IMR-90 (cell line): ENCODE measurements at regions of chr18 and their contacts with region 1.

Region 1: DNA sequence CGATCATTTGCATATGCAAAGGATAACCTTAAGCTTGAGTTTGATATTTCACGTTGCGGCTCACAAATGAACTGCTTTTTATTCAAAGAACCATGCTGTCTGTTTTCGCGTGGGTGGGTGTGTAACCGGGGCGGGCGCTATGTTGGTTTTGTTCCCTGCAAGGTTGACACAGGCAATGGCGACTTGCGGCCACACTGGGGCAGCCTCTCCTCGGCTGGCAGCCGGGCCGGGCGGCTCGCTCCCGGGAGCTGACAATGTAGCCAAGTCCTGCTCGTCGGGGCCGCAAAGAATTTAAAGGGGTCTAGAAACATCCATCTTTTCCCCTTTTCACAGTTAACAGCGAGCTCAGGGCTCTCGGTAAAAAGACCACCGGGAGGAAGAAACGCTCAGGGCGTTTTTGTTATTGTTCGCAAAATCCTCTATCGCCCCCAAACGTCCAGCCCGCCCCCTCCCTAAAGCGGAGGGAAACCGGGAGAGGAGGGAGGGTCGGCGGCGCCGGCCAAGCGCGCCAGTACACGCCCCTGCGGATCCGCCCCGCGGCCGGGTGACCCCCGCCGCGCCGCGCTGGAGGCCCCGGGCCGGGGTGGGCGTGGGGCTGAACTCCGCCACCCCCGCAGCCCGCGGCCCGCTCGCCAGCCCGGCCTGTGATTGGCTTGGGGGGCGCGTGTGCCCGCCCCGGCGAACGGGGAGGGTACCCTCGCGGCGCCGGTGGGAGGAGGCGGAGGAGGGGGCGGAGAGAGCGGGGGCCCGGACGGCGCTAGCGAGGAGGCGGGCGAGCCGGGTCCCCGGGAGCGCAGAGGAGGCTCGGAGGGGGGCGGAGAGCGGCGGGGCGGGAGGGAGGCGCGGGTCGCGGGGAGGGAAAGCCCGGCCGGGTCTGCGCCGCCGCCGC is at the start of gene NEDD4L:
- DNase-seq: peak; percentile 83
- ATAC-seq: peak; percentile 90
- H3K4me3 ChIP-seq: peak within 1 kb of the TSS; percentile 79
- H3K27ac ChIP-seq: peak within 1 kb of the TSS; percentile 58
- H3K4me1 ChIP-seq: peaks cover 5% of the 10 kb centered on the region
- H3K27me3 ChIP-seq: peaks cover 2% of the 10 kb centered on the region
- CTCF ChIP-seq: peak; percentile 95
- POLR2A ChIP-seq: peak; percentile 54; the same call in 1 of the 2 replicates
- RAD21 ChIP-seq: peak; percentile 92
- total RNA-seq, gene NEDD4L: 10.0 and 12.8 TPM in 2 replicates

Region 2: DNA sequence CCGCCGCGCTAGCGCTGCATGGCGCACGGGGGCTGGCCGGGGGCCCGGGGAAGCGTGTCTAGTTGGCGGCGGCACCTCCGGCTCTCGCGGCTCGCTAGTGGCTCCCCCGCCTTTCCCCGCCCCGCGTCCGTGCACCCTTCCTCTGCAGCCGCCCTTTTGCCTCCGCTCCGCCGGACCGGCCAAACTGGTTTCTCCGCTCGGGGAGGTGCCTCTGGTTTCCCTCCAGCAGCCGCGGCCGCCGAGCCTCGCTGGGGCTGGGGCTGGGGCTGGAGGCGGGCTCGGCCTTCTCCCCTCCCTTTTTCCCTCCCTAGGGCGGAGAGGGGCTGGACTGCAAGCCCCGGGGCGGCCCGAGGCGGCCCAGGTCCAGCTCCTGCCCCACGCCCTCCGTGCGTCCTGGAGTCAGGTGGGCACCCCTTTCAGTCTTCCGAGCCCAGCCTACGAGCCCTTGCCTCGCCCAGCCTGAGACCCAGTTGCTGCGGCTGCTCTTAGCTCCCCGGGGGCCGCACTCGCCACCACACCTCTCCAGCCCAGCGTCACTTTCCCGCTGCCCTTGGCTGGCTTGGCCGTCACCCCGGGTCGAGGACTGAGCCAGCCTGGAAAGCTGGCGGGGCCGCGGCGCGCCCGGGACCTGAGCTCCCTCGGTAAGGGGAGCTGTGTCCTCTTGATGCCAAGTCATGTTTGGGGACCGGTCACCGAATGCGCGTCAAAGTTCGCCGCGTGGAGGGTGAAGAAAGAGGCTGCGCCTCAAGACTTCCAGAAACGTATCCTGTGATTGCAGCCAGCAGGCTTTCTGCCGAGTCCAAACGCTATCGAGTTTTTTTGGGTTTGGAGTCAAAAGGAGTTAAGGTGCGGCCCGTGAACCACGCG is 240.4 kb before region 1 on chr18 and contains the start of gene ATP8B1:
- CTCF ChIA-PET with region 1: no interaction called
- POLR2A ChIA-PET with region 1: no interaction called
- dilution Hi-C with region 1: no loop called
- in situ Hi-C with region 1: no loop called
- intact Hi-C with region 1: loop called (anchors 10 kb)
- DNase-seq: peak; percentile 73
- ATAC-seq: peak; percentile 89
- H3K4me3 ChIP-seq: peak within 1 kb of the TSS; percentile 95
- H3K27ac ChIP-seq: peak within 1 kb of the TSS; percentile 77
- H3K4me1 ChIP-seq: peaks cover 8% of the 10 kb centered on the region
- H3K27me3 ChIP-seq: no peaks in the 10 kb centered on the region
- CTCF ChIP-seq: no peak
- POLR2A ChIP-seq: peak; percentile 47; the same call in 1 of the 2 replicates
- RAD21 ChIP-seq: no peak
- total RNA-seq, gene ATP8B1: 136 and 170 TPM in 2 replicates

Region 3: GRCh38 chr18:57970356-57971080 is 73.2 kb before region 1 on chr18:
- CTCF ChIA-PET with region 1: no interaction called
- POLR2A ChIA-PET with region 1: no interaction called
- dilution Hi-C with region 1: no loop called
- in situ Hi-C with region 1: no loop called
- intact Hi-C with region 1: loop called (anchors 5 kb)
- DNase-seq: no peak
- ATAC-seq: no peak
- H3K4me3 ChIP-seq: no peak overlapping the region
- H3K27ac ChIP-seq: no peak overlapping the region
- H3K4me1 ChIP-seq: peaks cover 4% of the 10 kb centered on the region; the same call in 1 of the 2 replicates
- H3K27me3 ChIP-seq: peaks cover 7% of the 10 kb centered on the region
- CTCF ChIP-seq: 0 out of 2 replicates have a peak, but pooled peaks have one; percentile 24
- POLR2A ChIP-seq: no peak
- RAD21 ChIP-seq: 0 out of 2 replicates have a peak, but pooled peaks have one; percentile 13

Region 4: GRCh38 chr18:58314284-58314683 is 270.5 kb after region 1 on chr18:
- CTCF ChIA-PET with region 1: no interaction called
- POLR2A ChIA-PET with region 1: no interaction called
- dilution Hi-C with region 1: no loop called
- in situ Hi-C with region 1: no loop called
- intact Hi-C with region 1: loop called (anchors 2 kb)
- DNase-seq: peak; percentile 95
- ATAC-seq: peak; percentile 97
- H3K4me3 ChIP-seq: no peak overlapping the region
- H3K27ac ChIP-seq: 0 out of 2 replicates have a peak overlapping the region, but pooled peaks have one; percentile 18
- H3K4me1 ChIP-seq: peaks cover 13% of the 10 kb centered on the region; the same call in 1 of the 2 replicates
- H3K27me3 ChIP-seq: no peaks in the 10 kb centered on the region
- CTCF ChIP-seq: no peak
- POLR2A ChIP-seq: no peak
- RAD21 ChIP-seq: peak; percentile 10; the same call in 1 of the 2 replicates

Region 5: GRCh38 chr18:58493516-58494253 is 449.9 kb after region 1 on chr18:
- CTCF ChIA-PET with region 1: no interaction called
- POLR2A ChIA-PET with region 1: no interaction called
- dilution Hi-C with region 1: no loop called
- in situ Hi-C with region 1: loop called (anchors 5 kb)
- intact Hi-C with region 1: loop called (anchors 1 kb)
- DNase-seq: peak; percentile 84
- ATAC-seq: peak; percentile 89
- H3K4me3 ChIP-seq: no peak overlapping the region
- H3K27ac ChIP-seq: no peak overlapping the region
- H3K4me1 ChIP-seq: peaks cover 7% of the 10 kb centered on the region; the same call in 1 of the 2 replicates
- H3K27me3 ChIP-seq: no peaks in the 10 kb centered on the region
- CTCF ChIP-seq: peak; percentile 88
- POLR2A ChIP-seq: no peak
- RAD21 ChIP-seq: peak; percentile 83

Region 6: DNA sequence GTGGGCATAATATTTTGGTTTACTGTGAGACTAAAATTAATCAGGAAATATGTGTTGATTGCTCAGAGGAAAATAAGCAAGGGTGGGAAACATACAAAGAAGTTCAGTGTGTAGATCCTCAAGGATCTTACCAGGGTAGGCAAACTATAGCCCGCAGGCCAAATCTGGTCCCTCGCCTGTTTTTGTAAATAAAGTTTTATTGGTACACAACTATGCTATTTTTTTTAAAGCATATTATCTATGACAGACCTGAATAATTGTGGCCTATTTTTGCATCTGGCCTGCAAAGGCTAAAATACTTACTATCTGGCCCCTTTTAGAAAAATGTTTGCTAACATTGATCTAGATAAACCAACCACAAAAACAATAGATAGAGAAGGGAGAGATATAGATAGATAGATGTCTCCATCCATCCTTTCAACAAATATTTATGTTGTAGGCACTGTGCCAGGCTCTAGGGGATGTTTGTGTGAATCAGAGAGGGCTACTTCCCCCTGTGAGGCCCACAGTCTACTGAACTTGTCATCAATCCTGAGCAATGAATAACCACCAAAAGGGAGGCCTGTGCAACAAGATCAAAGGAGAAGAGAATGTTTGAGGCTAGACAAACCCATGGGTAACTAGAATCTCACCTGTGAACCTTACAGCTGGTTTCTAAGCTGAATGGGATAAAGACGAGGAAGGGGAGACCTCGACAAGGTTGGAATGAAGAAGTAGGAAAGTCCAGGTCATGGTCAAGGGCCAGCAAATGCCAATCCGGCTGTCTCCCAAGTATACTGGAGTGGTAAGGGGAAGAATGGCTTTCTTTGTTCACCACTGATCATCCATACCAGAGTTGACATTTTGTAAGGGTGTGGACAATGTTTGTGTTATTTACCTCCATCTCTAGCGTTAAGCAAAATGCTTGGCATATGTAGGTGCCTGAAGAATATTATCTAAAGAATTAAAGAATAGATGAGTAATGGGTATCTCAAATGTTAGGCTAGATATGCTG is 561.6 kb after region 1 on chr18:
- CTCF ChIA-PET with region 1: no interaction called
- POLR2A ChIA-PET with region 1: no interaction called
- dilution Hi-C with region 1: no loop called
- in situ Hi-C with region 1: no loop called
- intact Hi-C with region 1: no loop called
- DNase-seq: peak; percentile 87
- ATAC-seq: peak; percentile 48; the same call in 1 of the 2 replicates
- H3K4me3 ChIP-seq: no peak overlapping the region
- H3K27ac ChIP-seq: no peak overlapping the region
- H3K4me1 ChIP-seq: peaks cover 11% of the 10 kb centered on the region
- H3K27me3 ChIP-seq: peaks cover 2% of the 10 kb centered on the region; the same call in 1 of the 2 replicates
- CTCF ChIP-seq: no peak
- POLR2A ChIP-seq: no peak
- RAD21 ChIP-seq: no peak

Region 7: DNA sequence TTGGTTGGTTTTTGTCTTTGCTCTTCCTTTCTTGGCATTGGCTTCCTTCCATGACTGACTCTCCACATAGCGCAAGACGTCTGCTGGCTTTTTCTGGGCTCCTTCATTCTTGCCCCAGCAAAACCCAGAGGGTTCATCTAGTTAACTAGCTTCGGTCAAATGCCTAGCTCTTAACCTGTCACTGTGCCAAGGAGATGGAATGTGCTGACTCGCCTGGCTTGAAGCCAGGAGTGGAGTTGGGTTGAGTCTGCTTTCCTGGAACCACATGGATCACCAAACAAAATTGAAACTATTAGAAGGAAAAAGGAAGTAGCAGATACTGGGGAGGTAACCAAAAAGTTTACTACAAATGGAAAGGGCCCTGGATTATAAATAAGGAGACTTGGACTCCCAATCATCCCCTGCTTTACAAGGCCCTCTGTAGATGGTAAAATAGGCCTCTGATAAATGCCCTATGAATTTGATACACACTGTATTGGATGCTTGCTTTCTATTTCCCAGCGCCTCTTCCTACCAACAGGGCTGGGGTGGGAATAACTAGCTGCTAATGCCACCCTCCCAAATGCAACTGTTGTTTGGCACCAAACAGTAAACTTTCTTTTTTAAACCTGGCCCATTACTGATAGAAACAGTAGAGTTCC is 638.8 kb after region 1 on chr18:
- CTCF ChIA-PET with region 1: no interaction called
- POLR2A ChIA-PET with region 1: no interaction called
- dilution Hi-C with region 1: no loop called
- in situ Hi-C with region 1: no loop called
- intact Hi-C with region 1: no loop called
- DNase-seq: peak; percentile 74
- ATAC-seq: peak; percentile 59; the same call in 1 of the 2 replicates
- H3K4me3 ChIP-seq: no peak overlapping the region
- H3K27ac ChIP-seq: no peak overlapping the region
- H3K4me1 ChIP-seq: peaks cover 3% of the 10 kb centered on the region; the same call in 1 of the 2 replicates
- H3K27me3 ChIP-seq: no peaks in the 10 kb centered on the region
- CTCF ChIP-seq: no peak
- POLR2A ChIP-seq: no peak
- RAD21 ChIP-seq: no peak